Spleen (tissue), 13 donors: ENCODE measurements at regions of chr4 and their contacts with region 1.

Region 1: DNA sequence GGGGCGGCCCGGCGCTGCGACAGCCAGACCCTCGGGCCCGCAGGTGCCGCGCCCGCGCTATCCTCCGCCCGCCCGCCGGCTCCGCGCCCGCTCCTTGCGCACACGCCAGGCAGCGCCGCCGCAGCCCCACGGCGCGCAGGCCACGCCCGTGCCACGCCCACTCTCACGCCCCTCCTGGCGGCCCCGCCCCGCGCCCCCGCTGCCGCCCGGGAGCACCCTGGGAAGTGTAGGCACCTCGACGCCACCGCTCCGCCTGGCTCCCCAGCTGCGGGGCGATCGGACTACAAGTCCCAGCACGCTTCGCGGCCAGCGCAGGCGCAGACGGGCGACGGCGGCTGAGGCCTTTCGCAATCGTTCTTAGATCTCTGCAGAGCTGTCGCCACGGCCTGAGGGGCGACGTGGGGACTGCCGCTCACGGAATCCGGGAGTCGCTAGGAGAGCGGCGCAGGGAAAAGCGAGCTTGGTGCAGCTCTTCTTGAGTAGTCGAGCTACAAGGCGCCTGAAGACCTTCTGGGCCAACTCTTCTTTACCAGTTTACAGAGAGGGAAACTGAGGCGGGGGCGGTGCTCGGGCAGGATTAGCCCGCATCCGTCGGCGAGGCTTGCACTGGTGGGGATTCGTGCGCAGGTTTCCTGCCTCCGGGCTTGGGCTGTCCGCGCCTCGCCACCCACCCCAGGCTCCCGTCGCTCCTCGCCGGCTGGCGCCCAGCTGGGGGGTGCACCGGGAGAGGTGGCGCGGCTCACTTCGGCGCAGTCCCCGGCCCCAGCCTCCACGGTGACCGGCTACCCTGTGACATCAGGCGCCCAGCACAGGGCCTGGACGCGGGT is at the start of gene ABLIM2:
- DNase-seq: peak; percentile 99
- H3K4me3 ChIP-seq: peak within 1 kb of the TSS; percentile 78 to 99 (median 94)
- H3K27ac ChIP-seq: peak within 1 kb of the TSS; percentile 27 to 85 (median 79)
- H3K4me1 ChIP-seq: peaks cover 6 to 74% (median 36%) of the 10 kb centered on the region in 6 donors
- H3K27me3 ChIP-seq: peaks cover 0 to 22% (median 12%) of the 10 kb centered on the region in 7 donors
- CTCF ChIP-seq: peak in 1 of 11 experiments; percentile 12
- POLR2A ChIP-seq: peak in 2 of 3 donors; percentile 56 to 88
- total RNA-seq, gene ABLIM2: 41.8 to 127 (median 100) TPM

Region 2: DNA sequence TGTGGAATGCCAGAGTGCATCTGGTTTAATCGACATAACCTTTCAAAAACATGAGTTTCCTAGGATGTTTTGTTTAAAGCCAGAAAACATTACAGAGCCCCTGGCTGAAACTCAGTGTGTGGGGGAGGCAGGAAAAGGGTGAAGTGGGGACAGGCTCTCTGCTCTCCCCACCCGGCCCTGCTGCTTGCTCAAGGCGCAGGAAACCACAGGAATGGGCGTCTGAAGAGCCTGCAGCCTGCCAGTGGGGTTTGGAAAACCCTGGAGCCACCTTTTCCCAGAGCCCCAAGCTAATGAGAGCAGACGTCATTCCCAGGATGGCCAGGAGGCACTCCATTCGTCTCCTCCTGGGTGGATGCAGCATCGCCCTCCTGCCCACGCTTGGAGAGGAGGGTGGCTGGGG is 459.9 kb before region 1 on chr4:
- intact Hi-C with region 1: no loop called
- DNase-seq: no peak
- H3K4me3 ChIP-seq: no peak overlapping the region
- H3K27ac ChIP-seq: no peak overlapping the region
- H3K4me1 ChIP-seq: peaks cover 0 to 25% (median 0%) of the 10 kb centered on the region in 6 donors
- H3K27me3 ChIP-seq: peaks cover 0 to 60% (median 0%) of the 10 kb centered on the region in 7 donors
- CTCF ChIP-seq: no peak
- POLR2A ChIP-seq: no peak

Region 3: GRCh38 chr4:8085491-8086117 is 73.3 kb before region 1 on chr4:
- intact Hi-C with region 1: no loop called
- DNase-seq: no peak
- H3K4me3 ChIP-seq: no peak overlapping the region
- H3K27ac ChIP-seq: no peak overlapping the region
- H3K4me1 ChIP-seq: peaks cover 0 to 24% (median 3%) of the 10 kb centered on the region in 6 donors
- H3K27me3 ChIP-seq: no peaks in the 10 kb centered on the region
- CTCF ChIP-seq: no peak
- POLR2A ChIP-seq: no peak

Region 4: GRCh38 chr4:8191136-8191747 is 32.3 kb after region 1 on chr4:
- intact Hi-C with region 1: loop called (anchors 2 kb)
- DNase-seq: peak; percentile 89
- H3K4me3 ChIP-seq: peak overlapping the region in 1 of 8 donors; percentile 24
- H3K27ac ChIP-seq: peak overlapping the region; percentile 57 to 88 (median 84)
- H3K4me1 ChIP-seq: peaks cover 20 to 71% (median 55%) of the 10 kb centered on the region in 6 donors
- H3K27me3 ChIP-seq: no peaks in the 10 kb centered on the region
- CTCF ChIP-seq: no peak
- POLR2A ChIP-seq: no peak